Breast epithelium (tissue), 4 donors: ENCODE measurements at regions of chr9 and their contacts with region 1.

Region 1: DNA sequence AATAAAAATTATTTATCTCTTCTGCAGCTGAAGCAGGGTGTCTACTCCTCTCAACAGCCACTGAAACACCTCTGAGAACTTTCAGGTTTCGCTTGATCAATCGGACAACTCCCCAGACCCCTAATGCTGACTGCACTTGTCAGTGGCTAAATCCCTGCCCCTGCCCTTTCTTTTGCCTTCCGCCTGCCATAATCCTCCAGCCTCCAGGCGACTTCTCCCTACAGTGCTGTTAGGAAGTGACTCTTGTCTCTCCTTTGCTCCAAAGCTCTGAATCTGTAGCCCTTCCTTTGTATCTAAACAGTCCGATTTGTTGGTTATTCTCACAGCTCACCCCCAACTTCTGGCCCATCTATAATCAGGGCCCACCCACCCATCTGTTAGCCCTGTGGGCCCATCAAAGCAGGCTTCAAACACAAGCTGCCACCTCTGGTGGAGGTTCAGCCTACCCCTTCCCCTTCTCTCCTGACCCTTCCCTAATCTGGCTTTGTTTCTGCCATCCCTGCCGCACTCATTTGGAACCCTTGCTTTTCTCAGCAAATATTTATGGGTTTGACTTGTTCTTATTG is 53.7 kb upstream of the IFNK start:
- DNase-seq: no peak
- H3K4me3 ChIP-seq: no peak overlapping the region
- H3K27ac ChIP-seq: peak overlapping the region; percentile 53 to 73
- H3K4me1 ChIP-seq: peaks cover 4 to 14% of the 10 kb centered on the region in 2 donors
- H3K27me3 ChIP-seq: no peaks in the 10 kb centered on the region
- CTCF ChIP-seq: no peak
- POLR2A ChIP-seq: no peak

Region 2: DNA sequence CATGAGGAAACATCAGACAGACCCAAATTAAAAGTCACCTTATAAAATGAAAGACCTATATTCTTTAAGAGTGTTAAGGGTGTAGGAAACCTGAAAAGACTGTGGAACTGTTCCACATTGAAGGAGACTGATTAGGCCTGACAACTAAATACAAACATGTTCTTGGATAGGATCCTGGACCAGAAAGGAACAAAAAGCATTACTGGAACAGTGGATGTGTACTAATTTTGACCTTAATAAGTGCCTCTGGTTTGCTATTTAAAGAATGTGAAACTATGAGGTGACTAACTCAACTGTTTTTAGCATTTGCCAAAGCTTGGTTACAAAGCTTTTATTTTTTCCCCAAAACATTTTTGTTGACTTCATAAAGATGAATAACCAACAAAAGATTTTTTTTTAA is 918.4 kb before region 1 on chr9:
- intact Hi-C with region 1: no loop called
- DNase-seq: no peak
- H3K4me3 ChIP-seq: no peak overlapping the region
- H3K27ac ChIP-seq: no peak overlapping the region
- H3K4me1 ChIP-seq: no peaks in the 10 kb centered on the region
- H3K27me3 ChIP-seq: no peaks in the 10 kb centered on the region
- CTCF ChIP-seq: no peak
- POLR2A ChIP-seq: no peak

Region 3: GRCh38 chr9:27451207-27451797 is 19.1 kb before region 1 on chr9:
- intact Hi-C with region 1: loop called (anchors 1 kb)
- DNase-seq: no peak
- H3K4me3 ChIP-seq: no peak overlapping the region
- H3K27ac ChIP-seq: peak overlapping the region in 1 of 2 donors; percentile 21
- H3K4me1 ChIP-seq: peaks cover 0 to 2% of the 10 kb centered on the region in 2 donors
- H3K27me3 ChIP-seq: no peaks in the 10 kb centered on the region
- CTCF ChIP-seq: no peak
- POLR2A ChIP-seq: no peak